ENCODE measurements at regions of chr5 and their contacts with region 1.

Region 1: GRCh38 chr5:131272307-131272706 is 8.5 kb downstream of the CDC42SE2 start:
- DNase-seq: no peak
- ATAC-seq: no peak
- H3K4me3 Mint-ChIP-seq: peak overlapping the region; percentile 82
- H3K27ac Mint-ChIP-seq: peak overlapping the region; percentile 91
- H3K4me1 Mint-ChIP-seq: peaks cover 56% of the 10 kb centered on the region
- H3K27me3 Mint-ChIP-seq: no peaks in the 10 kb centered on the region

Region 2: GRCh38 chr5:131242728-131243255 is 29.5 kb before region 1 on chr5:
- POLR2A ChIA-PET with region 1: no interaction called
- DNase-seq: no peak
- ATAC-seq: no peak
- H3K4me3 Mint-ChIP-seq: no peak overlapping the region
- H3K27ac Mint-ChIP-seq: no peak overlapping the region
- H3K4me1 Mint-ChIP-seq: peaks cover 6% of the 10 kb centered on the region
- H3K27me3 Mint-ChIP-seq: peaks cover 2% of the 10 kb centered on the region

Region 3: GRCh38 chr5:131289738-131290137 is 17.4 kb after region 1 on chr5:
- POLR2A ChIA-PET with region 1: interaction called, 30 read pairs
- DNase-seq: no peak
- ATAC-seq: peak; percentile 63
- H3K4me3 Mint-ChIP-seq: peak overlapping the region; percentile 87
- H3K27ac Mint-ChIP-seq: peak overlapping the region; percentile 94
- H3K4me1 Mint-ChIP-seq: peaks cover 46% of the 10 kb centered on the region
- H3K27me3 Mint-ChIP-seq: no peaks in the 10 kb centered on the region

Measured in activated naive CD8-positive, alpha-beta T cell treated with anti-CD3 and anti-CD28 coated beads, Interleukin-2, amount 10 ng/mL, durations not matched to agents 7 days and 5 days (primary cell).